ENCODE measurements at regions of chr9 and their contacts with region 1.

Region 1: DNA sequence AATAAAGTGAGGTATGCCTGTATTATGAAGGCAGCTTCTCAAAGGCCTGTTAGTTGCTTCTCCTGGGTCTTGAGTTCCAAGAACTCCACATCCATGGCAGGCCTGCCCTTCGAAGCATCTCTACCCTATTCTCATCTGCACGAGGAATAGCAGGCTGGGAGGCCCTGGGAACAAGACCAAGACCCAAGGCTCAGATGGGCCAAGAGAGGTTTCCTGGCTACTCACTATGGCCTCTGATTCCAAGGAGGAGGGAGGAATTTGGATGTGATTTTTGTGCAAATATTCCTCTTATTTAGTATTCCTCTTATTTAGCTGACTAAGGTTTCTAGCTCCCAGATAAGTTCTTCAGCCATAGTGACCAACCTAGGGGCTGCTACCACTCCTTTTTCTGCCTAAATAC is 151.3 kb downstream of the SAXO1 start:
- DNase-seq: no peak
- ATAC-seq: no peak
- H3K4me3 ChIP-seq: no peak overlapping the region
- H3K27ac ChIP-seq: no peak overlapping the region
- H3K4me1 ChIP-seq: no peaks in the 10 kb centered on the region
- H3K27me3 ChIP-seq: no peaks in the 10 kb centered on the region
- CTCF ChIP-seq: no peak
- EP300 ChIP-seq: no peak
- POLR2A ChIP-seq: no peak
- RAD21 ChIP-seq: no peak

Region 2: DNA sequence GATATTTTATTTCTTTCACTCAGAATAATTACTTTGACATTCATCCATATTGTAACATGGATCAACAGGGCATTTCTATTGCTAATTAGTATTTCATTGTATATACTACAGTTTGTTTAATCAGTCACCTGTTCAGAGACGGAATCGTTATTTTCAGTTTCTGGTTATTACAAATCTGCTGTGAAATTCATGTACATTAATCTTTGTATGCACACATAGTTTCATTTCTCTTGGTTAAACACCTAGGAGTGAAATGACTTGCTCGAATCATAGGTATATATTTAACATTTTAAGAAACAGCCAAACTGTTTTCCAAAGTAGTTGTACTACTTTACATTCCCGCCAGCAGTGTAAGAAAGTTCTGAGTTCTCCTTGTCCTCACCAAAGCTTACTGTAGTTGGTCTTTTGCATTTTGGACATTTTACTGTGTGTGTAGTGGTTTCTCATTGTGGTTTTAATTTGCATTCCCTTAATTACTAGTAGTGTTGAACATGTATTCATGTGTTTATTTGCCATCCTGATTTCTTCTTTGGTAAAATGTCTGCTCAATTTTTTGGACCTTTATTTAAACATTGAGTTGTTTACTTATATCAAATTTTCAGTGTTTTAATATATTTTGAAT is 46.9 kb before region 1 on chr9:
- CTCF ChIA-PET with region 1: no interaction called
- POLR2A ChIA-PET with region 1: no interaction called
- in situ Hi-C with region 1: no loop called
- intact Hi-C with region 1: loop called (anchors 5 kb)
- DNase-seq: no peak
- ATAC-seq: no peak
- H3K4me3 ChIP-seq: no peak overlapping the region
- H3K27ac ChIP-seq: no peak overlapping the region
- H3K4me1 ChIP-seq: no peaks in the 10 kb centered on the region
- H3K27me3 ChIP-seq: 0 out of 5 replicates have a peak, but pooled peaks cover 0 to under 1% of the 10 kb centered on the region in 2 experiments
- CTCF ChIP-seq: no peak
- EP300 ChIP-seq: no peak
- POLR2A ChIP-seq: no peak
- RAD21 ChIP-seq: no peak